Naive thymus-derived CD4-positive, alpha-beta T cell (primary cell): ENCODE measurements at regions of chr14 and their contacts with region 1.

Region 1: GRCh38 chr14:68627880-68628607 is 164.8 kb downstream of the ZFP36L1 start:
- DNase-seq: peak; percentile 34 to 65 (median 47)
- ATAC-seq: peak; percentile 74
- H3K4me3 ChIP-seq: peak overlapping the region; percentile 50
- H3K4me3 Mint-ChIP-seq: peak overlapping the region; percentile 58 to 90 (median 82)
- H3K27ac ChIP-seq: peak overlapping the region; percentile 45
- H3K27ac Mint-ChIP-seq: peak overlapping the region; percentile 38 to 94 (median 87)
- H3K4me1 ChIP-seq: peaks cover 3 to 12% of the 10 kb centered on the region in 2 donors
- H3K4me1 Mint-ChIP-seq: peaks cover 13 to 25% (median 21%) of the 10 kb centered on the region in 7 donors
- H3K27me3 ChIP-seq: no peaks in the 10 kb centered on the region
- H3K27me3 Mint-ChIP-seq: peaks cover 0 to 30% (median 0%) of the 10 kb centered on the region in 5 donors

Region 2: GRCh38 chr14:68137704-68138619 is 490.1 kb before region 1 on chr14:
- CTCF ChIA-PET with region 1: no interaction called
- POLR2A ChIA-PET with region 1: no interaction called
- intact Hi-C with region 1: no loop called
- DNase-seq: no peak
- ATAC-seq: no peak
- H3K4me3 ChIP-seq: no peak overlapping the region
- H3K4me3 Mint-ChIP-seq: no peak overlapping the region
- H3K27ac ChIP-seq: no peak overlapping the region
- H3K27ac Mint-ChIP-seq: no peak overlapping the region
- H3K4me1 ChIP-seq: no peaks in the 10 kb centered on the region
- H3K4me1 Mint-ChIP-seq: peaks cover 0 to 5% (median under 1%) of the 10 kb centered on the region in 7 donors
- H3K27me3 ChIP-seq: no peaks in the 10 kb centered on the region
- H3K27me3 Mint-ChIP-seq: no peaks in the 10 kb centered on the region

Region 3: DNA sequence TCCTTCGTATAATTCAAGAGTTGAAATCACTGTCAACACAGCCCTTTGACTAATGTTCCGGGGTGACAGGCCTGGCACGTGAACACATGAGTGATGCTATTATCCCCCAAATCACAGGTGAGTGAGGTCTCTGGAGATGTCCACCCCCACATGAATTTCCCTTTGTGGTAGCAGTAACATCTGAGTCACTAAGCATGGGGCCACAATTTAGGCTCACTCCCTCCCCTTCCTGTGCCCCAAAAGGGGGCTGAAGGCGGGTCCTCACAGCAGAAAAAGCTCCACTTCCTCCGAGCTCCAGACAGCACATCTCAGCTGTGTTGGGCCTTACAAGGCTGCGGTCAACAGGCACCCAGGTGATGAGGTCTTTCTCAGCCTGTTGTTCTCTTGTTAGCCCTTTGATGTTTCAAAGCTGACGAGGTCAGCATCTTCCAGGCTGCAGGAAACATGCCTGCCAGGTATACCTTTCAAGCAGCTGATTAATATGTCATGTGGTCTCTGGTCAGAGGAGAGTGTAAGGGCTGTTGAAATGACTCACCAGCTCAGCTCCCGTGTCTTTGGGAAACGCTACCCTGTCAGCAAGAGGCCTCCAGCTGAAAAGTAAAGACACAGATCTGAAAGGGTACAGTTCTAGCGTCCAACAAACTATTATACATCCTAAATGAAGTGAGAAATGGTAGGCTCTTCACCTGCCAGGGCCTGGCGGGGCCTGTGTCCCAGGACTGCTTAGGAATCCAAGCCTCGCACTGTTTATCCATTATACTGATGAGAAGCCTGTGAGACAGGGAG is 57.6 kb after region 1 on chr14:
- CTCF ChIA-PET with region 1: no interaction called
- POLR2A ChIA-PET with region 1: interaction called, 3 read pairs
- intact Hi-C with region 1: loop called in 1 of 2 experiments (anchors 10 kb)
- DNase-seq: peak; percentile 31 to 74 (median 64)
- ATAC-seq: peak; percentile 91
- H3K4me3 ChIP-seq: no peak overlapping the region
- H3K4me3 Mint-ChIP-seq: peak overlapping the region; percentile 3 to 74 (median 48)
- H3K27ac ChIP-seq: peak overlapping the region; percentile 25
- H3K27ac Mint-ChIP-seq: peak overlapping the region; percentile 74 to 97 (median 91)
- H3K4me1 ChIP-seq: peaks cover 44 to 53% of the 10 kb centered on the region in 2 donors
- H3K4me1 Mint-ChIP-seq: peaks cover 52 to 74% (median 59%) of the 10 kb centered on the region in 7 donors
- H3K27me3 ChIP-seq: no peaks in the 10 kb centered on the region
- H3K27me3 Mint-ChIP-seq: no peaks in the 10 kb centered on the region